ENCODE measurements at regions of chr10 and their contacts with region 1.

Region 1: DNA sequence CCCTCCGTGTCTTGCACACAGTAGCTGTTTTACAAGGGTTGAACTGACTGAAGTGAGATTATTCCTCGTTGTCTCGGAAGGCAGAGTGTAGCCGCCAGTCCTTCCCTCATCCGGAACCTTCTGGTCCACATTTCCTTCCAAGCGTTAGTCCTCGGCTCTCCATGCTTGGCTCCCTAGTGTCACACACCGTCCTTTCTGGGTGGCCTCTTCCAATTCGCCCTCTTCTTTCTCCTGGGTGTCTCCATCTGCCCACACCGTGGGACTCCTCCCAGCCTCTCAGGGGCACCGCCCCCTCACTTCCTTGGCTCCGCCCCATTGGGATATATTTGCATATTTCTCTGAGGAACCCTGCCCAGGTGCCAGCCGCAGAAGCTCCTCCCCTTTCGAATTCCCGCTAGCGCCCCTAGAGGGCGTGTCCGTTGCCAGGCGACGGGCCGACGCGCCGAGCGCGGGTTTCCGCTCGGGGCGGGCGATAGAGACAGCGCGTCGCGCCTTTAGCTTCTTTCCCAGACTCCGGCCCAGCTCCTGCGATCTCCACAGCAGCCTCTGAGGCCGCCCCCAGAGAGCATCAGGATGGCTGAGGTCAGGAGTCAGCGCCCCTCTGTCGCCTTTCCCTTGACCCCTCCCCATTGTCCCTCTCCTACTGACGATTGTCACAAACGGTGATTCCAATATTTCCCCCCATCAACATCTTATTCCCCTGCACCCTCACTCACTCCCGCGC is at the start of gene CFAP58:
- DNase-seq: peak; percentile 83
- ATAC-seq: peak; percentile 77
- H3K4me3 Mint-ChIP-seq: no peak within 1 kb of the TSS
- H3K27ac Mint-ChIP-seq: peak within 1 kb of the TSS; percentile 57
- H3K4me1 Mint-ChIP-seq: peaks cover 11% of the 10 kb centered on the region
- H3K27me3 Mint-ChIP-seq: no peaks in the 10 kb centered on the region
- CTCF ChIP-seq: no peak
- total RNA-seq, gene CFAP58: not detected in 2 replicates

Region 2: GRCh38 chr10:103692952-103693802 is 660.3 kb before region 1 on chr10:
- CTCF ChIA-PET with region 1: no interaction called
- POLR2A ChIA-PET with region 1: no interaction called
- intact Hi-C with region 1: loop called (anchors 5 kb)
- DNase-seq: peak; percentile 57
- ATAC-seq: peak; percentile 42
- H3K4me3 Mint-ChIP-seq: peak overlapping the region; percentile 90
- H3K27ac Mint-ChIP-seq: peak overlapping the region; percentile 71
- H3K4me1 Mint-ChIP-seq: peaks cover 51% of the 10 kb centered on the region
- H3K27me3 Mint-ChIP-seq: no peaks in the 10 kb centered on the region
- CTCF ChIP-seq: no peak

Region 3: DNA sequence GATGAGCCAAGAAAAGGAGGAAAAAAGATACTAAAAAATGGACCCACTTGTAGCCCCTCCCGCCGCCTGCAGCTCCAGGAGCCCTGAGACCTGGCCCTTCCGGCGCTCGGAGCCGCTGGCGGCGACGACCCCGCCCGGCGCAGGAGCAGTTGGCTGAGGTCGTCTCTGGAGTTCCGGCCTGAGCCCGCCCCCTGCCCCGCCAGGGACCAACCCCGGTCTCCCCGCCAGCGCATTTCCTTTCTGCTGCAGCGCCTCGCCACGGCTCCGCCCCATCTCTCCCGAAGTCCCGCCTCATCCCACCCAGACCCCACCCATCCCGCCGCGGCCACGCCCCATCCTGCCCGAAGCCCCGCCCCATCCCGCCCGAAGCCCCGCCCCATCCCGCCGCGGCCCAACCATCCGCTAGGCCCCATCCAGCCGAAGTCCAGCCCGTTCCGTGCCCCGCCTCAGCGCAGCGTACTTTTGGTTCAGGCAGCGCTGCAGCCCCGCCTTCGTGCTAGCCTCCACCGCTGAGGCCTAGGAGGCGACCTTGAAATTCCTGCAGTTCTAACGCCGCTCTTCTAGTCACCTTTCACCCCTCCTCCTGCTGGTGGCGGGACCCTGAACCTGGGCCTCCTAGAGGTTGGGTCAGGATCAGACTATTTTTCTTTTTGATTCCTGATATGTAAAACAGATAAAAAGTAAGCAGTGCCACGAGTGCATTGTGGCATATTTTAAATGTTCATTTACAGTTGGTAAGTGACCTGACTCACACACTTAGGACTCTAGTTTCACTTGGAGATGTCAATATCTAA is 435.2 kb before region 1 on chr10 and contains the start of gene STN1:
- CTCF ChIA-PET with region 1: no interaction called
- POLR2A ChIA-PET with region 1: no interaction called
- intact Hi-C with region 1: loop called (anchors 2 kb)
- DNase-seq: peak; percentile 91
- ATAC-seq: peak; percentile 94
- H3K4me3 Mint-ChIP-seq: peak within 1 kb of the TSS; percentile 93
- H3K27ac Mint-ChIP-seq: peak within 1 kb of the TSS; percentile 96
- H3K4me1 Mint-ChIP-seq: peaks cover 41% of the 10 kb centered on the region
- H3K27me3 Mint-ChIP-seq: no peaks in the 10 kb centered on the region
- CTCF ChIP-seq: no peak
- total RNA-seq, gene STN1: 14.0 and 14.2 TPM in 2 replicates

Region 4: GRCh38 chr10:104268716-104269645 is 84.5 kb before region 1 on chr10 and contains the start of gene GSTO2:
- CTCF ChIA-PET with region 1: interaction called, 35 read pairs
- POLR2A ChIA-PET with region 1: interaction called, 7 read pairs
- intact Hi-C with region 1: loop called (anchors 1 kb)
- DNase-seq: peak; percentile 90
- ATAC-seq: peak; percentile 96
- H3K4me3 Mint-ChIP-seq: peak within 1 kb of the TSS; percentile 91
- H3K27ac Mint-ChIP-seq: peak within 1 kb of the TSS; percentile 95
- H3K4me1 Mint-ChIP-seq: peaks cover 41% of the 10 kb centered on the region
- H3K27me3 Mint-ChIP-seq: peaks cover 1% of the 10 kb centered on the region
- CTCF ChIP-seq: no peak
- total RNA-seq, gene GSTO2: 0.56 and 0.91 TPM in 2 replicates

Region 5: GRCh38 chr10:104291439-104291951 is 62.0 kb before region 1 on chr10:
- CTCF ChIA-PET with region 1: interaction called, 79 read pairs
- POLR2A ChIA-PET with region 1: interaction called, 4 read pairs
- intact Hi-C with region 1: loop called (anchors 1 kb)
- DNase-seq: peak; percentile 77
- ATAC-seq: peak; percentile 100
- H3K4me3 Mint-ChIP-seq: peak overlapping the region; percentile 61
- H3K27ac Mint-ChIP-seq: no peak overlapping the region
- H3K4me1 Mint-ChIP-seq: peaks cover 6% of the 10 kb centered on the region
- H3K27me3 Mint-ChIP-seq: peaks cover 9% of the 10 kb centered on the region
- CTCF ChIP-seq: peak; percentile 94

Region 6: GRCh38 chr10:104308439-104308903 is 45.0 kb before region 1 on chr10:
- CTCF ChIA-PET with region 1: interaction called, 208 read pairs
- POLR2A ChIA-PET with region 1: interaction called, 22 read pairs
- intact Hi-C with region 1: loop called (anchors 1 kb)
- DNase-seq: no peak
- ATAC-seq: peak; percentile 19
- H3K4me3 Mint-ChIP-seq: no peak overlapping the region
- H3K27ac Mint-ChIP-seq: peak overlapping the region; percentile 64
- H3K4me1 Mint-ChIP-seq: peaks cover 23% of the 10 kb centered on the region
- H3K27me3 Mint-ChIP-seq: no peaks in the 10 kb centered on the region
- CTCF ChIP-seq: no peak

Region 7: DNA sequence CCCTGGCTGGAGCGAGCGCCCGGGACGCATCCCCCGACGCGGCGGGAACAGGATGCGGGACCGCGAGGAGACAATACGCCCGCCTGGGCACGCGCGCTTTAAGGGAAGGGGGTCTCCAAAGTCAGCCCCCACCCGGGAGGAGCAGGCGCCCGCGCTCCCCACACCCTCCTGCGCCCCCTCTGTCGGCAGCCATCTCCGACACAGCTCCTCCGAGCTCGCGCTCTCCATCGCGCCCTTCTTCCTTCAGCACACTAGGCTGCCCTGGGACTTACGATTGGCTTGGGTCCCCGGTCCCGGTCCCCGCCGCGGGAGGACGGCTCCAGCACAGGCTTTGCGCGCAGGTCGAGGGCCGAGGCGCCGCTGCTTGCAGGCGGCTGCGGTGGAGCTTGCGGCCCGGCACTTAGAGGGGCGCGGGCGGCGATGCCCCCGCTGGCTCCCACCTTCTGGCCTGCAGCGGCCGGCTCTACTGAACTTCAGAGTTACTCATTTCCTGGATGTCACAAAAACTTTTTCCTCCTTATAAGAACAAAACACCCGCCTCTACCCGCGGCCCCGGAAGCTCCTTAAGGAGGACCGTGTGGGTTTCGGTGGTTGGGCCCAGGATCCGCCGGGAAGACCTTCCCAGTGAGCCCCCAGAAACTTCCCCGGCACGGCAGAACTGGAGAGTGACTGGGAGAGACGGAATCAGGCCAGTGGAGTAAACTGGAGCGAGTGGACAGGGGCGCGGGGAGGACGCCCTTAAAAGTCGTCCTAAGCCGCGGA is 15.3 kb before region 1 on chr10 and contains the start of gene ITPRIP:
- CTCF ChIA-PET with region 1: interaction called, 27 read pairs
- POLR2A ChIA-PET with region 1: interaction called, 73 read pairs
- intact Hi-C with region 1: loop called (anchors 1 kb)
- DNase-seq: peak; percentile 67
- ATAC-seq: peak; percentile 65
- H3K4me3 Mint-ChIP-seq: peak within 1 kb of the TSS; percentile 98
- H3K27ac Mint-ChIP-seq: peak within 1 kb of the TSS; percentile 100
- H3K4me1 Mint-ChIP-seq: peaks cover 55% of the 10 kb centered on the region
- H3K27me3 Mint-ChIP-seq: no peaks in the 10 kb centered on the region
- CTCF ChIP-seq: no peak
- total RNA-seq, gene ITPRIP: 21.3 and 26.1 TPM in 2 replicates

Region 8: DNA sequence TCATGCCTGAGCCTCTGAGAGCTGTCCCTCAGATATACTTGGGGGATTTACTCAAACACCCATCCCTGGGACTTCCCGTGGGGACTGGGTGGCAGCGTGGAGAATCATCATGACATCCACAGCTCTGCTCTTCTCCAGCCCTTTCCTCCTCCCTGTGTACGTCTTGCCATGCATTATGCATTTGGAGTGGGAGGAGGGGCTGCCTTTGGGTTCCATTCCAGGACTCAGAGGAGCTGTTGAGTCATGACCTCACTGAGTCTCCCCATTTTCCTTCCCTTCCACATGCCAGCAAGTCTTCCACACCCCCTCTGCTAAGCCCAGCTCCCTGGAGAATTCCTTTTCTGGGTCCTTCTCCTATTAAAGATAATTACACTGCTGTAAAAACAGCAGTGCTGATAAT is 768.3 kb after region 1 on chr10:
- CTCF ChIA-PET with region 1: no interaction called
- POLR2A ChIA-PET with region 1: no interaction called
- intact Hi-C with region 1: no loop called
- DNase-seq: no peak
- ATAC-seq: no peak
- H3K4me3 Mint-ChIP-seq: no peak overlapping the region
- H3K27ac Mint-ChIP-seq: no peak overlapping the region
- H3K4me1 Mint-ChIP-seq: no peaks in the 10 kb centered on the region
- H3K27me3 Mint-ChIP-seq: no peaks in the 10 kb centered on the region
- CTCF ChIP-seq: no peak